CD4-positive, alpha-beta T cell (primary cell): ENCODE measurements at regions of chr2 and their contacts with region 1.

Region 1: DNA sequence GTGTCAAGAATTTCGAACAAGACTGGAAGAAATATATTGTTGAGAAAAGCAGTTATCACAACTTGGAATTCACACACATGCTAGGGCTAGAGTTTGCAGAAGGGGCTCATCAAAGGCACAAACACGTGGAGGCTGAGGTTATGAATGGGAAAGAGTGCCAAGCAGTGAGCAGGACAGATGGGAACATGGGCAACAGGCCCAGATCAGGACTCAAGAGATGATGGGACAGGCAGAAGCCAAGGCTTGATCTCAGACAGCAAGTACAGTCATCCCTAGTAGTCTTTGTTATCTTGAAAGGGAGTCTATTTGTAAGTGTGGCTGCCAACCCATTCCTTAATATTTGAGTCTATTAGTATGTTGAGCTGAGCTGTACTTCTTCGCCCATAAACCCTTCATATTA is 22.2 kb upstream of the EPC2 start:
- DNase-seq: no peak
- ATAC-seq: no peak
- H3K4me3 ChIP-seq: no peak overlapping the region
- H3K4me3 Mint-ChIP-seq: no peak overlapping the region
- H3K27ac ChIP-seq: no peak overlapping the region
- H3K27ac Mint-ChIP-seq: no peak overlapping the region
- H3K4me1 ChIP-seq: no peaks in the 10 kb centered on the region
- H3K4me1 Mint-ChIP-seq: no peaks in the 10 kb centered on the region
- H3K27me3 ChIP-seq: no peaks in the 10 kb centered on the region
- H3K27me3 Mint-ChIP-seq: no peaks in the 10 kb centered on the region
- CTCF ChIP-seq: no peak

Region 2: GRCh38 chr2:148578493-148578884 is 43.9 kb before region 1 on chr2:
- CTCF ChIA-PET with region 1: no interaction called
- POLR2A ChIA-PET with region 1: no interaction called
- intact Hi-C with region 1: loop called in 1 of 2 experiments (anchors 5 kb)
- DNase-seq: no peak
- ATAC-seq: no peak
- H3K4me3 ChIP-seq: no peak overlapping the region
- H3K4me3 Mint-ChIP-seq: no peak overlapping the region
- H3K27ac ChIP-seq: no peak overlapping the region
- H3K27ac Mint-ChIP-seq: no peak overlapping the region
- H3K4me1 ChIP-seq: no peaks in the 10 kb centered on the region
- H3K4me1 Mint-ChIP-seq: no peaks in the 10 kb centered on the region
- H3K27me3 ChIP-seq: no peaks in the 10 kb centered on the region
- H3K27me3 Mint-ChIP-seq: peaks cover 15% of the 10 kb centered on the region
- CTCF ChIP-seq: no peak